ENCODE measurements at regions of chr19 and their contacts with region 1.

Region 1: GRCh38 chr19:46600384-46601317 is 479 bp upstream of the CALM3 start:
- DNase-seq: peak; percentile 96 to 98
- H3K4me3 ChIP-seq: peak overlapping the region; percentile 98
- H3K4me3 Mint-ChIP-seq: peak overlapping the region; percentile 94
- H3K27ac Mint-ChIP-seq: peak overlapping the region; percentile 100
- H3K4me1 ChIP-seq: peaks cover 14% of the 10 kb centered on the region
- H3K4me1 Mint-ChIP-seq: no peaks in the 10 kb centered on the region
- H3K27me3 ChIP-seq: no peaks in the 10 kb centered on the region; the same call in 1 of the 2 replicates
- H3K27me3 Mint-ChIP-seq: no peaks in the 10 kb centered on the region
- CTCF ChIP-seq: no peak

Region 2: DNA sequence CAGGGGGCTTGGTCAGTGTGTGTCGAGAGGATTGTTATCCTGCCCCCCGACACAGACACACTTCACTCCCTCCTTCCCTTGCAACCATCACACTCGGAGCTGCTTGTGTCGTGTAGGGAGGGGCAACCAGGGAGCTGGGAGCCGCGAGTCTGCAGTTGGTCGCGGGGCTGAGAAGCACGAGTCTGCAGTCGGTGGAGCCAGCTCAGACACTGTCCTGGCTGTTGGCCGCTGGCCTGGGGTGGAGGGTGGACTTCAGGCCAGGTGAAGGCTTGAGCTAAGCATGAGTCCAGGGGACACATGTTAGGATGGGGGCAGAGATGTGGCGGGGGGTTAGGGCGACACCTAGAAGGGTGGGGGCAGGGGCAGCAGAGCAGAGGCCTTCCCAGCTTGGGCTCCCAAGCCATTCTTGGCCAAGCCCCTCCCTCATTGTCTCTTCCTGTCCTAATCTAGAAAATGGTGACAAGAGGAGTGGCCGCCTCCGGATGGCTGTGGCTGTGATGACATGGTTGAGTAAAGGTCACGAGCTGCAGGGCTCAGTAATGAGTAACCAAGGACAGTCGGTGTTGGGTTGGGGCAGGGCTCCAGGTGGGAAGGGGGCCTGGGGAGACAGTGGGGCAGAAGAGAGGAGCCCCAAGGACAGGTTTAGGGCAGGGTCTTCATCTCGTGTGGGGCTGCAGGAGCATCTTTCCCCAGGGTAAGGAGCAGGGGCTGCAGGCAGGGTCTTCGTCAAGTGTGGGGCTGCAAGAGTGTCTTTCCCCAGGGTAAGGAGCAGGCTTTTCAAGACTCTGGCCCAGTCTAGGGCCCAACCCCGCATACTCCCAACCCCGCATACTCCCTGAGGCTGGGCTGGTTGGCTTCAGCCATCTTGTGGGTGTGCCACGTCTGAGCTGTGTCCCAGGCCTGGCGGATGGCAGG is 245.2 kb before region 1 on chr19:
- CTCF ChIA-PET with region 1: no interaction called
- POLR2A ChIA-PET with region 1: no interaction called
- intact Hi-C with region 1: no loop called
- DNase-seq: peak; percentile 74 to 88
- H3K4me3 ChIP-seq: no peak overlapping the region
- H3K4me3 Mint-ChIP-seq: peak overlapping the region; percentile 10
- H3K27ac Mint-ChIP-seq: peak overlapping the region; percentile 56
- H3K4me1 ChIP-seq: peaks cover 46% of the 10 kb centered on the region
- H3K4me1 Mint-ChIP-seq: no peaks in the 10 kb centered on the region
- H3K27me3 ChIP-seq: no peaks in the 10 kb centered on the region
- H3K27me3 Mint-ChIP-seq: no peaks in the 10 kb centered on the region
- CTCF ChIP-seq: no peak

Region 3: DNA sequence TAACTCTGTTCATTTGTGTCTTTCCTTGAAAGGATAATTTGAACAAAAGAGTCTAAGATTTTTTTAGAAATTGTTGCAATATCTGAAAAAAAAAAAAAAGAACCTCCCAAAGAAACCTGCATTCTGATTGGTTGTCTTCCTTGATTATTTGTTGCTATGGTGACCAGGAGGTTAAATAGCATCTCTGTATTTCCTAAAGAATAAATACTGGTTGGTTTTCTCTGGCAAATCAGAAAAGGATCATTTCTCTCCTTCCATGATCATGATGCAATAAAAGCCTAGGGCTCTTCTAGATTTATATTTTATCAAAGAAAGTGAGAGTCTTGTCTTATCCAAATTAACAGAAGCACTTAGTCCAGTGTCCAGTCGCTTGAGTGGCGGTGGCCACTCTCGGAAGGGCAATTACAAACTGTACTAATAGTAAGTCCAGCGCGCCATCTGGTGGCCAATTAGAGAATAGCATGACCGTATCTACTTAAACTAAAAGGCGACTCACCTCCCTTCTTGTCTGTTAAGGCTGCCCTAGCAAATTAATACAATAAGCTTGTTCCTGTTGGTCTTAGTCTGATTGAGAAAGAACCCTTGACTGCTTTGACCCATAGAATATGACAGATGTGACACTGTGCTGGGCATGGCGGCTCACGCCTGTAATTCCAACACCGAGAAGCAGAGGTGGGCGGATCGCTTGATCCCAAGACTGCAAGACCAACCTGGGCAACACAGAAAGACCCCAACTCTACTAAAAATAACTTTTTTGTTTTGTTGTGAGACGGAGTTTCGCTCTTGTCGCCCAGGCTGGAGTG is 58.0 kb before region 1 on chr19:
- CTCF ChIA-PET with region 1: no interaction called
- POLR2A ChIA-PET with region 1: no interaction called
- intact Hi-C with region 1: no loop called
- DNase-seq: peak; percentile 83 to 91
- H3K4me3 ChIP-seq: no peak overlapping the region
- H3K4me3 Mint-ChIP-seq: no peak overlapping the region
- H3K27ac Mint-ChIP-seq: no peak overlapping the region
- H3K4me1 ChIP-seq: peaks cover 8% of the 10 kb centered on the region
- H3K4me1 Mint-ChIP-seq: no peaks in the 10 kb centered on the region
- H3K27me3 ChIP-seq: no peaks in the 10 kb centered on the region
- H3K27me3 Mint-ChIP-seq: peaks cover 7% of the 10 kb centered on the region
- CTCF ChIP-seq: peak; percentile 75 to 94

Region 4: GRCh38 chr19:46571531-46571930 is 29.1 kb before region 1 on chr19:
- CTCF ChIA-PET with region 1: interaction called, 7 read pairs
- POLR2A ChIA-PET with region 1: interaction called, 4 read pairs
- intact Hi-C with region 1: loop called (anchors 1 kb)
- DNase-seq: peak; percentile 76 to 78
- H3K4me3 ChIP-seq: no peak overlapping the region
- H3K4me3 Mint-ChIP-seq: no peak overlapping the region
- H3K27ac Mint-ChIP-seq: no peak overlapping the region
- H3K4me1 ChIP-seq: no peaks in the 10 kb centered on the region
- H3K4me1 Mint-ChIP-seq: no peaks in the 10 kb centered on the region
- H3K27me3 ChIP-seq: no peaks in the 10 kb centered on the region
- H3K27me3 Mint-ChIP-seq: no peaks in the 10 kb centered on the region
- CTCF ChIP-seq: peak; percentile 34 to 66

Region 5: GRCh38 chr19:46614114-46614722 is 13.6 kb after region 1 on chr19:
- CTCF ChIA-PET with region 1: interaction called, 42 read pairs
- POLR2A ChIA-PET with region 1: interaction called, 6 read pairs
- intact Hi-C with region 1: loop called (anchors 1 kb)
- DNase-seq: peak; percentile 87 to 90
- H3K4me3 ChIP-seq: no peak overlapping the region
- H3K4me3 Mint-ChIP-seq: no peak overlapping the region
- H3K27ac Mint-ChIP-seq: no peak overlapping the region
- H3K4me1 ChIP-seq: no peaks in the 10 kb centered on the region
- H3K4me1 Mint-ChIP-seq: peaks cover 6% of the 10 kb centered on the region
- H3K27me3 ChIP-seq: no peaks in the 10 kb centered on the region
- H3K27me3 Mint-ChIP-seq: no peaks in the 10 kb centered on the region
- CTCF ChIP-seq: peak; percentile 93 to 95

Region 6: DNA sequence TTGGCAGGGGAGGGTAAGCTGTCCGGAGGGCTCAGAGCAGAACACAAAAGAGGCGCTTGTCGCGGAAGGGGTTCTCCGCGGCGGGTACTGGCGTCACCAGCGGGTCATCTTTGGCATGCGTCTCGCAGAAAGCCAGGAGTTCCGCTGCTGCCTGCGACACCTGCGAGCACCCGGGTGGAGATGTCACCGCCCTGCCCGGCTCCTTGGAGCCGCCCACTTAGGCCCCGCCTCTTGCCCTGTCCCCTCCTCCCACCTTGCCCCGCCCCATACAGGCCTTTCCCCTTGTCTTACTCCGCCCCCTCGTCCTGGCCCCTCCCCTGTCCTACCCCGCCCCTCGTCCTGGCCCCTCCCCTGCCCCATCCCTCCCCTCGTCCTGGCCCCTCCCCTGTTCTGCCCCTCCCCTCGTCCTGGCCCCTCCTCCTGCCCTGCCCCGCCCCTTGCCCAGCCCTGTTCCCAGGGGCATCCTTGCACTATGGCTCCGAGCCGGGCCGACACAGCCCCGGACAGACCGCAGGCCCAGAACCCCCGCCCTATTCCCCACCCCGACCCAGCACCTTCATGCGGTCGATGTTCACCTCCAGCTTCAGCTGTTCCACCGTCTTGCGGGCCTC is 33.5 kb after region 1 on chr19:
- CTCF ChIA-PET with region 1: interaction called, 3 read pairs
- POLR2A ChIA-PET with region 1: no interaction called
- intact Hi-C with region 1: loop called (anchors 1 kb)
- DNase-seq: peak; percentile 96 to 97
- H3K4me3 ChIP-seq: peak overlapping the region; percentile 34
- H3K4me3 Mint-ChIP-seq: peak overlapping the region; percentile 66
- H3K27ac Mint-ChIP-seq: peak overlapping the region; percentile 49
- H3K4me1 ChIP-seq: peaks cover 9% of the 10 kb centered on the region
- H3K4me1 Mint-ChIP-seq: peaks cover 8% of the 10 kb centered on the region
- H3K27me3 ChIP-seq: no peaks in the 10 kb centered on the region; the same call in 1 of the 2 replicates
- H3K27me3 Mint-ChIP-seq: peaks cover 12% of the 10 kb centered on the region
- CTCF ChIP-seq: no peak

Region 7: GRCh38 chr19:46745521-46746280 is 145.1 kb after region 1 on chr19 and contains the start of gene FKRP:
- CTCF ChIA-PET with region 1: interaction called, 13 read pairs
- POLR2A ChIA-PET with region 1: interaction called, 3 read pairs
- intact Hi-C with region 1: no loop called
- DNase-seq: peak; percentile 55 to 61
- H3K4me3 ChIP-seq: peak within 1 kb of the TSS; percentile 99
- H3K4me3 Mint-ChIP-seq: peak within 1 kb of the TSS; percentile 94
- H3K27ac Mint-ChIP-seq: peak within 1 kb of the TSS; percentile 95
- H3K4me1 ChIP-seq: no peaks in the 10 kb centered on the region
- H3K4me1 Mint-ChIP-seq: peaks cover 21% of the 10 kb centered on the region
- H3K27me3 ChIP-seq: no peaks in the 10 kb centered on the region
- H3K27me3 Mint-ChIP-seq: no peaks in the 10 kb centered on the region
- CTCF ChIP-seq: no peak
- total RNA-seq, gene FKRP: 30.6 and 33.1 TPM in 2 replicates